Right ventricle myocardium inferior (tissue), 1 donor: ENCODE measurements at regions of chr9 and their contacts with region 1.

Region 1: GRCh38 chr9:123749580-123750202 is 180.2 kb downstream of the DENND1A start:
- DNase-seq: no peak
- ATAC-seq: no peak

Region 2: GRCh38 chr9:123702483-123702882 is 47.2 kb before region 1 on chr9:
- intact Hi-C with region 1: no loop called
- DNase-seq: no peak
- ATAC-seq: no peak

Region 3: DNA sequence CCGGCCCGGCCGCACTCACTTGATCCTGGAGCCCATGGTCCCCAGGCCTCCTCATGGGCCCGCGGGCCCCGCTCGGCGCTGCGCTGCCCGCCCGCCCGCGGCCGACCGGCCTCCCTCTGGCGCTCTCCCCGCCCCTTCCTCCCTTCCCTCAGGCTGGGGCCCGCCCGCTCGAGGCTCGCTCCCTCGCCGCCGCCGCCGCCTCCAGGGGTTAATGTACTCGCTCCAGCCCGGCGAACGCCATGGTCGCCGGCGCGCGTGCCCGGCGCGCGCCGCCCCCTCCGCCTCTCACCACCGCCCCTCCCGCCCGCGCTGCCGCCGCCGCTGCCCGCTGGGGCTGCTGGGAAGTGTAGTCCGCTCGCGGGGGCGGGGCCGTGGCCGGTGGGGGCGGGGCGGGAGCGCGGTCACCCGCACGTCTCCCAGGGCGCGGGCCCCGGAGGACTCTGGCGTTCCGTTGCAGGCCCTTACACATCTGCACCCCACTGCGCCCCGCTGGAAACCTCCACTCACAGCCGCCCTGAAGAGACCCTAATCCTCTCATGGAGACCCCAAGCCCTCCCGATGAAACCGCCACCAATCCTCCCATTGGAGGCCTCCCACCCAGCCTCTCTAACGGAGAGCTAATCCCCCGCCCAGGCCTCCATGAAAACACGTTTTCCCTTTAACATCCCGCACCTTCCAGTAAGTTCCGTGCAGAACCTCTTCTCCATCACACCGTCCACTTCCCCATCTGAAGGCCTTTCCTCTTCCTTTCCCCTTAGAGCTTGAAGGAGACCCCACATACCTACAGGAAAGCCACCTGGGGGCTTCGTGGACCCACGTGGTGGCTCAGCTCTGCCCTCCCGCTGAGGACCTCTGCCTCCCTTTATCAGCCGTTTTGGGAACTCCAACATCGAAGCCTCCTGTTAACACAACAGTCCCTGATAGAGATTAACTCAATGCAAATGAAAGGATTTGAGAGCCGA is 180.5 kb after region 1 on chr9 and contains the start of gene DENND1A:
- intact Hi-C with region 1: loop called (anchors 10 kb)
- DNase-seq: peak; percentile 96
- ATAC-seq: peak; percentile 98
- total RNA-seq, gene DENND1A: 13.6 TPM